Kidney (tissue), 22 donors: ENCODE measurements at regions of chr5 and their contacts with region 1.

Region 1: GRCh38 chr5:128498844-128499455 is 39.1 kb downstream of the FBN2 start:
- DNase-seq: peak in 2 of 5 donors; percentile 75 to 89
- H3K4me3 ChIP-seq: no peak overlapping the region
- H3K27ac ChIP-seq: no peak overlapping the region
- H3K4me1 ChIP-seq: no peaks in the 10 kb centered on the region
- H3K27me3 ChIP-seq: no peaks in the 10 kb centered on the region
- CTCF ChIP-seq: peak; percentile 26

Region 2: GRCh38 chr5:128213340-128213739 is 285.6 kb before region 1 on chr5:
- intact Hi-C with region 1: loop called (anchors 10 kb)
- DNase-seq: peak in 4 of 5 donors; percentile 61 to 90 (median 80)
- H3K4me3 ChIP-seq: no peak overlapping the region
- H3K27ac ChIP-seq: no peak overlapping the region
- H3K4me1 ChIP-seq: no peaks in the 10 kb centered on the region
- H3K27me3 ChIP-seq: no peaks in the 10 kb centered on the region
- CTCF ChIP-seq: peak; percentile 78